AG04449 (cell line): ENCODE measurements at regions of chr17 and their contacts with region 1.

Region 1: DNA sequence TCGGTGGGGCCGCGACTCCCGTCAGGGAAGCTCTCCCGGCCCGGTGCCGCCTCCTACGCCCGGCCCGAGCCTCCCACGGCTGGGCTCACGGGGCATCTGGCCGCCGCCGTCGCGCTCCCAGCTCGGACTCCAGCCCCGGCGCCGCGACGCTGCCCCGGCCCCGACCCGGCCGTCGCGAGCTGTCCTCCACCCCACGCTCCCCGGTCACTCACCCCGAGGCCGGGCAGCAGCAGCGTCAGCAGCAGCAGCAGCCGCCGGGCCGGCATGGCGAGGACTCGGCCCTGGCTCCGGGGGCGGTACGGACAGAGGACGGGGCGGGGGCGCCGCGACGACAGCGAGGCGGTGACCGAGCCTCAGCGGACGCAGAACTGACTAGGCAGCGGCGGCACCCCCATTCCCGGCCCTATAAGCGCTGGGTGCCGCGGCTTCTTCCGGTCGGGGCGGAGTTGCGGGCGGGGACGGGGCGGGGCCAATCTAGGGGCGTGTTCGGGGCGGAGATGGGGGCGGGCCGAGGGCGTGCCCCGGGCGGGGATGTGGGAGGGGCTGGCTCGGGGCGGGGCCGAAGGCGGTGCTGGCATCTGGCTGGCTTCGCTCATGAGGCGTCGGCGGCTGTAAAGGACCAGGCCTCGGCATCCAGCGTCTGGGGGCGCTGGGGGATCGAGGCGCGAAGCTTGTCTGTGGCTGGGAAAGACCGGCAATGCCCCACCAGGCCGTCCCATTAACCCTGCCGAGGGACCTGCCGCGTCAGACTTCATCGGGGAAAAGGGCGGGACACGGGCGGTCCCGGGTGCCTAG is at the start of gene ERN1:
- DNase-seq: peak; percentile 56
- H3K4me3 ChIP-seq: peak within 1 kb of the TSS; percentile 64
- CTCF ChIP-seq: no peak

Region 2: DNA sequence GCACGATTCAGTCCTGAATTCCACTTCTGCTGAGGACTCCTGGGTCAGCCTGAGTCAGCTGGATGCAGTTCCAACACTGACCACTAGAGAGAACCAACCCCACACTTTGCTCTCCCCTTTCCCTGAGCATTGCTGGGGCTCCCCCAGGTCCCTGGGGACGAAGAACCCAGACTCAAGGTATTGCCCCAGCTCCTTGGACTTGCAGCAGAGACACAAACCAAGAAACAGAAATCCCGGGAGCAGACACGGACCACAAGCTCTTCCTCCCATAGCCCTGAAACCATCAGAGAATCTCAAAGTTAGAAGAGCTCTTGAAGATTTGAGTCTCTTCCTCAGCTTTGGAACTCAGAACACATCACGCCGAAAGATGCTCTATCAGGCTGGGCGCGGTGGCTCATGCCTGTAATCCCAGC is 210.6 kb before region 1 on chr17:
- CTCF ChIA-PET with region 1: interaction called, 111 read pairs
- POLR2A ChIA-PET with region 1: no interaction called
- DNase-seq: no peak
- H3K4me3 ChIP-seq: no peak overlapping the region
- CTCF ChIP-seq: peak; percentile 89

Region 3: DNA sequence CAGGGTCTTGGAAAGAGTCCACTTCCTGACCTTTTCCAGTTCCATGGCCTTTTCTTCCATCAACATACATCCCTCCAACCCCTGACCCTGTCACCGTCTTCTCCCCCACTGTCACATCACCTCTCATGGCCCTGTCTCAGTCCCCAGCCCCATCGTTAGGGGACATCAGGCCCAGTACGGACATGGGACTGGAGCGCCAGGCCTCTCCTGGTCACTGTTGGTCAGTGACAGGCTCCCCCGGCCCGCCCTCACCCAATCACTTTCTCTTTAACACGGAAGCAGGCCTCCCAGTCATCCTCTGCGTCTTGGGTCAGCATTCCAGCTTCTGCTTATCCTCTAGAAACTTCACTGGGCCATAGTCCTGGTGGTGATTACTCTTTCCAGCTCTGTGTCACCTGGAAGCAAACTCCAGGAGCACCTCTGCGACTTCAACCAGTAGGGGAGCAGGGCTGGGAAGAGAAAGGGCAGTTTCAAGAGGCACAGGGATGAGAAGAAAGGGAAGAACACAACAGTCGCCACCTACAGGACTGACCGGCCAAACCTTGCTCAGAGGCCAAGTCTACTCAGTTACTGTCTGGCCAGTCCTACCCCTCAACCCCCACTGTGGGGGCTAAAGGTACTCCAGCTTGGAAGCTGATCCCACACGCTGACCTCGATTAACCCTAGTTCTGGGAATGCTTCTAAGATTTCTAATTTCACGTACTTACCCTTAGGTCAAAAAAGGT is 93.6 kb before region 1 on chr17:
- CTCF ChIA-PET with region 1: interaction called, 1,118 read pairs
- POLR2A ChIA-PET with region 1: interaction called, 3 read pairs
- DNase-seq: no peak
- H3K4me3 ChIP-seq: no peak overlapping the region
- CTCF ChIP-seq: no peak

Region 4: DNA sequence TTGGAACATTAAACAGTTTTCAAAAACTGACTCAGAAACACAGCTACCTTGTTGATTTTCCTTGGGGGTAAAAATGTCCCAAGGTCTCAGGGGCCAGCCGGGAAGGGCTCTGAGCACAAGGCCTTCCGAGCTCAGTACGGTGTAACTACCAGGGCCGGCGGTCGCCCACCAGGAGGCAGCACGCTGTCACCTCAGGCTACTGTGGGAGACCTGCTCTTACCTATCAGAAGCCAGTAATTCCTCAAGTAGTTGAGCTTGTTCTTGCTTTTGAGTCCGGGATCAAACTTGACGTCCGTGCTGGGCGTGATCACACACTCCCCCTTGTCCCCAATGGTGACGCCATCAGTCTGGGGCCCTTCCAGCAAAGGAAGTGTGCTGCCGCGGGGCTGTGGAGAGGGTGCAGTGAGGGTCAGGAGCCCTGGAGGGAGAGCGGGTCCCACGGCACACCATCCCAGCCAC is 66.2 kb before region 1 on chr17:
- CTCF ChIA-PET with region 1: interaction called, 83 read pairs
- POLR2A ChIA-PET with region 1: no interaction called
- DNase-seq: no peak
- H3K4me3 ChIP-seq: no peak overlapping the region
- CTCF ChIP-seq: peak; percentile 47

Region 5: GRCh38 chr17:64117981-64118979 is 11.7 kb before region 1 on chr17:
- CTCF ChIA-PET with region 1: interaction called, 37 read pairs
- POLR2A ChIA-PET with region 1: interaction called, 4 read pairs
- DNase-seq: no peak
- H3K4me3 ChIP-seq: no peak overlapping the region
- CTCF ChIP-seq: no peak

Region 6: DNA sequence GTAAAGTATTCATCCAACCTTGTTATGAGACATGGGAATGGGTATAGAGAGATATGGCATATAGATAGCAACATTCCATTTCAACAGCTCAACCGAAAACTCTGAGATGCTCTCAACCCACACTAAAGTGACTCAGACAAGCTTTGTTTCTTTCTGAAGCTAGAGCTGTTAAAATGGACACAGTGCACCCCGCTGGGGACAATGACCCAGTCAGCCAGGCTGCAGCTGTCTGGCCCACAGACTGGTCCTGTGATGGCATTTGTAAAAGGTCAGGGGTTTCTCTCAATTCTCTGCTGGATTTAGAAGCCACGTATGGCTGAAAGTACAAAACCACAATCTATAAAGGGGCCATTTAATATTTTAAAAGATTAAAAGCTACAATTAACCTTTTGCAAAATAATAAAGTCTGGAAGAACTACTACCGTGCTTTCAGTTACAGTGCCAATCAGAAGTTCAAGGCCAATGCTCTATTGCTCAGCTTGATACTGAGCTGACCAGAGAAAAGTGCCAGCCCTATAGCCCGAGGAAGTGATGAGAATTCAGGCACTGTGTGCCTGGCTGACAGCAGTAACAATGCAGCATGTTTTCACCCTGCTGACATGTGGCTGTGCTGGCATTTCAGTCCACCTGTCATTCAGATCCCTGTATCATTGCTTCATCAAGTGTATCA is 72.8 kb after region 1 on chr17:
- CTCF ChIA-PET with region 1: no interaction called
- POLR2A ChIA-PET with region 1: no interaction called
- DNase-seq: no peak
- H3K4me3 ChIP-seq: no peak overlapping the region
- CTCF ChIP-seq: no peak

Region 7: GRCh38 chr17:64291254-64291851 is 161.4 kb after region 1 on chr17:
- CTCF ChIA-PET with region 1: interaction called, 10 read pairs
- POLR2A ChIA-PET with region 1: no interaction called
- DNase-seq: no peak
- H3K4me3 ChIP-seq: no peak overlapping the region
- CTCF ChIP-seq: peak; percentile 7